Activated B cell treated with CpG ODN at 0.5 μM for 24 hours (primary cell): ENCODE measurements at regions of chr17 and their contacts with region 1.

Region 1: DNA sequence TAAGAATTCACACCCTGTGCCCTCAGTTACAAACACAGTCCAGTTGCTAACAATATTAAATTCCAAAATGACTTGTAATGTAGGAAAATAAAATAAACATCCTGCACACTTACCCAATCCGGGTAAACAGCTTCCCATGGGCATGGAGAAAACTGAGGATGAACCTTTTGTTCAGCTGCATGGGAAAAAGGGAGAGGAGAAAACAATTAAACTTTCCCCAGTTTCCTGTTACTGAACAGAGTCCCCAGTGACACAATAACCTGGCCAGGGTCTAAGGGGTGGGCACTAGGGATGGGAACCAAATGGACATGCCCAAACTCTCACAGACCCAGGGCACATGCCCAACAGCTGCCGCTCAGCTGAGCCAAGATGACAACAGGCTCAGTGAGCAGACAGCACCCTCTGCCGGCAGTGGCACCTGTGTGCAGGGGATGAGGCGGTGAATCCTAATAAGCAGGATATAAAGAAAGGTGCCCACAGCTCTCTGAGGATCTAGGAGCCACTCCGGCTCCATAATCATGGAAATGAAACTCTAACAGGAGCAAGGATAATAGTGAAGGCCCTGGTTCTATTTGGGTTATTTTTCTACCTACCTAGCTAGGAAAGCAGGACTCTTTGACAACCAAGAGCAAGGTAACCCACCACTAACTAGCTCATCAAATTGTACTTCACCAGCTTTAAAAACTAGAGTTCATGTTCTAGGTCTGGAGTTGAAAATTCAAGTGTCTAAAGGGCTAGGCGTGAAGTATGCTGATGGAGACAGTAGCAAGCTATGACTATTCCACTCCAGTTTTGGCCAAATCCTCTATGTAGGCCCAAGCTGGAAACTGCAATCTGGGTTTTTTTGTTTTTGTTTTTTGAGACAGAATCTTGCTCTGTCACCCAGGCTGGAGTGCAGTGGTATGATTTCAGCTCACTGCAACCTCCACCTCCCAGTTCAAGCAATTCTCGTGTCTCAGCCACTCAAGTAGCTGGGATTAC is 58.8 kb downstream of the SMG6 start:
- DNase-seq: peak; percentile 70
- ATAC-seq: peak; percentile 72
- H3K4me3 Mint-ChIP-seq: no peak overlapping the region
- H3K27ac Mint-ChIP-seq: no peak overlapping the region
- H3K4me1 Mint-ChIP-seq: peaks cover 14% of the 10 kb centered on the region
- H3K27me3 Mint-ChIP-seq: no peaks in the 10 kb centered on the region
- CTCF ChIP-seq: peak; percentile 44

Region 2: DNA sequence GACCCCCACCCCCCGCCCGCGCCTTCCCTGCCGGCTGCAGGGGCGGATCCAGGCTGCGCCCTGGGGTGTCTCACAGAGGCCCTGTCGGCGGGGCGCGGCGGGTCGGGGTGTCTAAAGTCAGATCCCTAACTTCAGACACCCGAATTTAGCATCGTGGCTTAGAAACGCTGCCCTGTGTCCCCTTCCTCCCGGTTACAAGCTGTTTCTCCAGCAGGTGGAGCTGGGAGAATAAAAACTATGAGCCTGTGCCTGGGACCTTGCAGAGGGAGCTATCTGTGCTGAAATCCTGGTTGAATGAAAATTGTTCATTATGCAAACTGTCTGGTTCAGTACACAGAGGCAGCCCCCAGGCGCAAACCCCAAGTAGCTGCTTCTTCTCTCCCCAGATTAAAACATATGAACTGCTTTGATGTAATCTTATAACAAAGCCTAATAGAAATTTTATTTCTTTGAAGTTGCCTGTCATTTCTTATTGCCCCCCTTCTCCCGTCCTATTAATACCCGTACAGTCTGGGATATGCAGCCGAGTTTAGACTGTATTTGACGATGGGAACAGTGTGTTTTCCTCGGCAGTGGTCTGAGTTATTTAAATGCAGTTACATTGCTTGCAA is 336.0 kb before region 1 on chr17:
- CTCF ChIA-PET with region 1: interaction called, 14 read pairs
- POLR2A ChIA-PET with region 1: no interaction called
- intact Hi-C with region 1: loop called (anchors 1 kb)
- DNase-seq: no peak
- ATAC-seq: peak; percentile 71
- H3K4me3 Mint-ChIP-seq: peak overlapping the region; percentile 67
- H3K27ac Mint-ChIP-seq: no peak overlapping the region
- H3K4me1 Mint-ChIP-seq: peaks cover 30% of the 10 kb centered on the region
- H3K27me3 Mint-ChIP-seq: peaks cover 51% of the 10 kb centered on the region
- CTCF ChIP-seq: no peak

Region 3: DNA sequence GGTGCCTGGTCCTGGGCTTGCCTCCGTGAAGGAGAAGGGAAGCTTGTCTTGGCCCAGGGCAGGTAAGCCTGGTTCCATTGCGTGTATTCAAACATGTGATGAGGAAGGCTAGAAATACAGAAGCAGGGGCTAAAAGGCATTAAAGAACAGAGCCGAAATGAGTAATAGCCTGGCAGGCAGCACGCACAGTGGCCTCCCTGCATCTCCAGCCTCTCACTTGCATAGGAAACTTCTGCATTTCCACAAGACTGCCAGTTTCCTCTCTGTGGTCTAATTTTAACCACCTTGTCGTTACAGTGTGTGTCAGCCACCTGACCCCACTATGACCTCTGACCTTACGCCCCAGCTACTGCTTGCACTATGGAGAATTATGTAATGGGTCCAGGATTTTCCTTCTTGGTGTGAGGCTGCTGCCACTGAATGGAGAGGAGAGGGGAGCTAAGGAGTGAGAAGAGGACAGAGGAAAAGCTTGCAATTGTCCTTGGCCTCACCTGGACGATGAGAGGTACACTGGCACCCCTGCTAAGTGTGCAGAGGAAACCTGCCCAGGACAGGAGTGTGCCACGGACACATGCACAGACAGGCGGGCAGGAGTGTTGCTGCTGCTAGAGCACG is 157.1 kb before region 1 on chr17:
- CTCF ChIA-PET with region 1: interaction called, 11 read pairs
- POLR2A ChIA-PET with region 1: interaction called, 18 read pairs
- intact Hi-C with region 1: loop called (anchors 1 kb)
- DNase-seq: peak; percentile 48
- ATAC-seq: peak; percentile 63
- H3K4me3 Mint-ChIP-seq: peak overlapping the region; percentile 60
- H3K27ac Mint-ChIP-seq: peak overlapping the region; percentile 72
- H3K4me1 Mint-ChIP-seq: peaks cover 80% of the 10 kb centered on the region
- H3K27me3 Mint-ChIP-seq: no peaks in the 10 kb centered on the region
- CTCF ChIP-seq: no peak

Region 4: DNA sequence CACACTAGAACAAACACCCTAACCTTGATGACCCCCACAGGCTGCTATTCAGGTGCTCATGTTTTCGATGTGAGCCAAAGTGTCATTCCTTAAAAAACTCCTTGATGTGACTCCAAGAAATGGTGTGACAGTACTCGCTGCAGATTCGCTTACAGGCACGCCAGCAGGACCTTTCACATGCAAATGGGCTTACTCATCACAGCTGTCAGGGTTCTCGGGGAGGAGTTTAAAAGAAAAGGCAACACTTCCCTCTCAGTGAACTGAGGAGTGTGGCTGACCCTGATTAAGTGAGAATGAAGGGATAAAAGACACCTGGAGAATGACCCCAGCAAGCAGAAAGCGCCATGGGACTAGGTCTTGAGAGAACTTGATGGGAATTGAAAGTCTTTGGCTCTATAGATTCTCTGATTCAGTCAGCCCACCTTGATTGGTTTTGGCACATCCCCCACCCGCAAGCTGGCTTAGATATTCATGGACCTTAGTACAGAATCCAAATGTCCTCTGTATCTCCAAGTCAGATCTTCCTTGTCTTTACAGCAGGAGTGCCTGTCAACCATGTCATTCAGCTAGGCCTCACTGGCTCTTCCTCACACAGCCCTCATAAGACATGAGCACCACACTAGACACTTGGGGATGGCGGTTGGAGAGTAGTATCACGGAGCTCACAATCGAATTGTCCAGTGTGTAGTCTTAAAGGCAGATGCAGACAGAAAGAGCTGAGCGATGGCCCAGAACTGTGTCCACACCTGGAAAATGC is 107.3 kb before region 1 on chr17:
- CTCF ChIA-PET with region 1: interaction called, 10 read pairs
- POLR2A ChIA-PET with region 1: no interaction called
- intact Hi-C with region 1: no loop called
- DNase-seq: no peak
- ATAC-seq: peak; percentile 91
- H3K4me3 Mint-ChIP-seq: no peak overlapping the region
- H3K27ac Mint-ChIP-seq: peak overlapping the region; percentile 84
- H3K4me1 Mint-ChIP-seq: peaks cover 24% of the 10 kb centered on the region
- H3K27me3 Mint-ChIP-seq: no peaks in the 10 kb centered on the region
- CTCF ChIP-seq: no peak

Region 5: GRCh38 chr17:2215616-2216364 is 29.0 kb before region 1 on chr17:
- CTCF ChIA-PET with region 1: interaction called, 13 read pairs
- POLR2A ChIA-PET with region 1: interaction called, 23 read pairs
- intact Hi-C with region 1: no loop called
- DNase-seq: peak; percentile 33
- ATAC-seq: peak; percentile 97
- H3K4me3 Mint-ChIP-seq: peak overlapping the region; percentile 76
- H3K27ac Mint-ChIP-seq: peak overlapping the region; percentile 92
- H3K4me1 Mint-ChIP-seq: peaks cover 31% of the 10 kb centered on the region
- H3K27me3 Mint-ChIP-seq: no peaks in the 10 kb centered on the region
- CTCF ChIP-seq: no peak

Region 6: DNA sequence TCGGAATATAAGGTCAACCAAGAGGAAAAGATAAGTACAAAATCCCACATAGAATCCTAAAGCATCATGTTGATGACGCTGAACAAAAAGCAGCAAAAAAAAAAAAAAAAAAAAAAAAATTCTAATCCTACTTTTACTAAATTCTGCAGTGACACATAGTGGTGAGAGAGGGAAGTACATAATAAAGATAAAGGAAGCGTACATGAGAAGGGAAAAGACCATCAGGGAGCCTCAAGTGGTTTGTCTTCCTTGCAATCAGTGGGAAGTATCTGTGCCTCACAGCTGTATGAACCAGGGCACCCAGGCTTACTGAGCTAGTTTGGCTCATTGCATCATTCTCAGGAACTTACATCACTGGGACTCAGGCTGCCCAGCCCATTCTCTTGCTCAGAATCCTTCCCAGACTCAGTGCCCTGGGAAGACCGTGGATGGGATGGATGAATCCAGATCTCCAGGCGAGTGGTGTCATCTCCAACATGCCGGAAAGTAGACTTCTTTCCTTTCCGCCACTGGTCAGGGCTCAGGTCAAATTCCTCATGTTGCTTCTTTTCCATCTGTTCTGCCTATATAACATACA is 37.5 kb after region 1 on chr17:
- CTCF ChIA-PET with region 1: interaction called, 12 read pairs
- POLR2A ChIA-PET with region 1: no interaction called
- intact Hi-C with region 1: no loop called
- DNase-seq: no peak
- ATAC-seq: peak; percentile 66
- H3K4me3 Mint-ChIP-seq: no peak overlapping the region
- H3K27ac Mint-ChIP-seq: no peak overlapping the region
- H3K4me1 Mint-ChIP-seq: no peaks in the 10 kb centered on the region
- H3K27me3 Mint-ChIP-seq: no peaks in the 10 kb centered on the region
- CTCF ChIP-seq: no peak

Region 7: DNA sequence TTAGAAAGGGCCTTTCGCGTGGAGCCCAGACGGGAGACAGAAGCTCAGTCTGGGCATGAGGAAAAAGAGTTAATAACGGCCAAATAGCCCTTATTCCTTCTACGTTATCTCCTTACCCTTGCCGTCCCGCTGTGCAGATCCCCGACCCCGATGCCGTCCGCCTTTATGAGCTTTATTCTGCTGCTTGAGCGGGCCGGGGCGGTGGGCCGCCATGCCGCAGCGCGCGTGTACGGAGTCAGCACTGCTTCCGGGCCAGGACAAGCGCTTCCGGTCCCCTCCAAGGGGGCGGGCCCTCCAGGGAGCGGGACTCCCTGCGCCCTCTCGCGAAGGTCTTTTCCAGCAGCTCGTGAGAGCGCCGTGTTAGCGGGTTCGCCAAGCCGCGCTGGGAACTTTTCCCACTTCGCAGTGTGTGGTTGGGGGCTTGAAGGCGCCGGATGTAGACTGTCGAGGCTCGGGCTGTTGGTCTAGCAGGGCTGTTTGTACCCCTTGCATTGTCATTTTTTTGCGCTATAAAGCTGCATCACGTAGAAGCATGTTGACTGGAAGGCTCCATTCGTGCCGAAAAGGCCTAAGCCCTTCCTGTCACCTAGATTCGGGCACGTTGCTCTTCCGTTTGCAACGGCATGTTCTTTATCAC is 91.5 kb after region 1 on chr17 and contains the start of gene TSR1:
- CTCF ChIA-PET with region 1: no interaction called
- POLR2A ChIA-PET with region 1: no interaction called
- intact Hi-C with region 1: no loop called
- DNase-seq: peak; percentile 85
- ATAC-seq: peak; percentile 79
- H3K4me3 Mint-ChIP-seq: peak within 1 kb of the TSS; percentile 99
- H3K27ac Mint-ChIP-seq: peak within 1 kb of the TSS; percentile 96
- H3K4me1 Mint-ChIP-seq: peaks cover 23% of the 10 kb centered on the region
- H3K27me3 Mint-ChIP-seq: no peaks in the 10 kb centered on the region
- CTCF ChIP-seq: no peak
- total RNA-seq, gene TSR1: 46.4 and 48.5 TPM in 2 replicates

Region 8: GRCh38 chr17:2416010-2416734 is 171.3 kb after region 1 on chr17:
- CTCF ChIA-PET with region 1: no interaction called
- POLR2A ChIA-PET with region 1: no interaction called
- intact Hi-C with region 1: no loop called
- DNase-seq: peak; percentile 84
- ATAC-seq: peak; percentile 83
- H3K4me3 Mint-ChIP-seq: no peak overlapping the region
- H3K27ac Mint-ChIP-seq: no peak overlapping the region
- H3K4me1 Mint-ChIP-seq: no peaks in the 10 kb centered on the region
- H3K27me3 Mint-ChIP-seq: no peaks in the 10 kb centered on the region
- CTCF ChIP-seq: peak; percentile 47